ENCODE measurements at regions of chr3 and their contacts with region 1.

Region 1: DNA sequence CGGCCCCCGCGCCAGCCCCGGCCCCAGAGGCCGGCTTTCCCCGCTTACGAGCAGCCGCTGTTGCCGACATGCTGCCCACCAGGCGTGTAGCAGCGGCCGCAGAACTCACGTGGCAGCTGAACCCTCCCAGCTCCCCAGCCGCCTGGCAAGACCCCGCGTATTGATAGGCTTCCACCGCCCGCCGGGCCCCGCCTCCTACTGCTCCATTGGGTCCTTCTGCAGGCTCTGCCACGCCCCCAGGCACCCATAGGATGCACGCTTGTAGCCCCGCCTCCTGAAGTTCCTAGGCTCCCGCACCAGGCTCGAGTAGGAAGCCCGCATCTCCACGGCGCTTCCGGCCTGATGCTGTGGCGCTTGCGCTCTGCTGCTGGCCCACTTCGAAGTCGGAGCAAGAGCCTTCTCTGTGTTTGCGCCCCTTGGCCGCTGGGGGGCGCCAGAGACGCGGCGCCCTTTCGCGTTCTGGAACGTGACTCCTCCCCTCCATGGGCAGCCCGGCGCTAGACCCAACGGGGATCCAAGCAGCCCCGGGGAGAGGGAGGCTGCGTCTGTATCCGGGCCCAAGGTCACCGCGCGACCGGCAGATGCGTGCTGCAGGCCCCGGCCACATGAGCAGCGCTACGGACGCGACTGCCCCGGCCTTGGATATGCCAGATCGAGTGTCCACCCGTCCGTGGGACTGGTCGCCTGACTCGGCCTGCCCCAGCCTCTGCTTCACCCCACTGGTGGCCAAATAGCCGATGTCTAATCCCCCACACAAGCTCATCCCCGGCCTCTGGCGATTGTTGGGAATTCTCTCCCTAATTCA is at the starts of genes PARP3 and RRP9:
- DNase-seq: peak; percentile 93 to 99 (median 96)
- ATAC-seq: peak; percentile 96
- H3K4me3 ChIP-seq: peak within 1 kb of the TSS; percentile 90
- H3K27ac ChIP-seq: peak within 1 kb of the TSS; percentile 88
- H3K4me1 ChIP-seq: peaks cover 19 to 33% of the 10 kb centered on the region in 2 experiments; a peak in 4 of 5 replicates
- H3K27me3 ChIP-seq: no peaks in the 10 kb centered on the region
- CTCF ChIP-seq: peak; percentile 94 to 98 (median 96)
- EP300 ChIP-seq: no peak
- POLR2A ChIP-seq: peak; percentile 75
- RAD21 ChIP-seq: peak; percentile 84 to 88
- polyA plus RNA-seq, gene PARP3: 0.46 to 0.55 TPM
- polyA plus RNA-seq, gene RRP9: 5.2 to 12.9 TPM

Region 2: GRCh38 chr3:51974963-51975851 is 33.2 kb after region 1 on chr3 and contains the start of gene ABHD14A:
- CTCF ChIA-PET with region 1: no interaction called
- POLR2A ChIA-PET with region 1: no interaction called
- in situ Hi-C with region 1: no loop called
- intact Hi-C with region 1: loop called (anchors 1 kb)
- DNase-seq: peak; percentile 75 to 79 (median 76)
- ATAC-seq: peak; percentile 85
- H3K4me3 ChIP-seq: peak within 1 kb of the TSS; percentile 62
- H3K27ac ChIP-seq: peak within 1 kb of the TSS; percentile 98
- H3K4me1 ChIP-seq: peaks cover 24 to 55% of the 10 kb centered on the region in 2 experiments
- H3K27me3 ChIP-seq: no peaks in the 10 kb centered on the region
- CTCF ChIP-seq: no peak
- EP300 ChIP-seq: 0 out of 2 replicates have a peak, but pooled peaks have one; percentile 3
- POLR2A ChIP-seq: peak; percentile 70
- RAD21 ChIP-seq: no peak
- polyA plus RNA-seq, gene ABHD14A: 0.90 to 2.0 TPM

Region 3: GRCh38 chr3:51995346-51996163 is 53.6 kb after region 1 on chr3 and contains the start of gene RPL29:
- CTCF ChIA-PET with region 1: no interaction called
- POLR2A ChIA-PET with region 1: interaction called, 5 read pairs
- in situ Hi-C with region 1: no loop called
- intact Hi-C with region 1: loop called (anchors 1 kb)
- DNase-seq: peak; percentile 78 to 93 (median 82)
- ATAC-seq: peak; percentile 81
- H3K4me3 ChIP-seq: peak within 1 kb of the TSS; percentile 67
- H3K27ac ChIP-seq: peak within 1 kb of the TSS; percentile 80
- H3K4me1 ChIP-seq: peaks cover 36 to 42% of the 10 kb centered on the region in 2 experiments
- H3K27me3 ChIP-seq: no peaks in the 10 kb centered on the region
- CTCF ChIP-seq: no peak
- EP300 ChIP-seq: peak; percentile 55
- POLR2A ChIP-seq: peak; percentile 98
- RAD21 ChIP-seq: no peak
- polyA plus RNA-seq, gene RPL29: 568 to 871 TPM

Region 4: GRCh38 chr3:52056968-52057805 is 115.2 kb after region 1 on chr3:
- CTCF ChIA-PET with region 1: no interaction called
- POLR2A ChIA-PET with region 1: no interaction called
- in situ Hi-C with region 1: no loop called
- intact Hi-C with region 1: loop called (anchors 2 kb)
- DNase-seq: peak; percentile 93 to 98 (median 96)
- ATAC-seq: peak; percentile 91
- H3K4me3 ChIP-seq: peak overlapping the region; percentile 61
- H3K27ac ChIP-seq: peak overlapping the region; percentile 68
- H3K4me1 ChIP-seq: peaks cover 17 to 52% of the 10 kb centered on the region in 2 experiments; a peak in 4 of 5 replicates
- H3K27me3 ChIP-seq: no peaks in the 10 kb centered on the region
- CTCF ChIP-seq: 0 out of 6 replicates have a peak, but pooled peaks of 1 of the 3 experiments have one; percentile 11
- EP300 ChIP-seq: no peak
- POLR2A ChIP-seq: 0 out of 2 replicates have a peak, but pooled peaks have one; percentile 40
- RAD21 ChIP-seq: no peak; a peak in 1 of 4 replicates

Region 5: DNA sequence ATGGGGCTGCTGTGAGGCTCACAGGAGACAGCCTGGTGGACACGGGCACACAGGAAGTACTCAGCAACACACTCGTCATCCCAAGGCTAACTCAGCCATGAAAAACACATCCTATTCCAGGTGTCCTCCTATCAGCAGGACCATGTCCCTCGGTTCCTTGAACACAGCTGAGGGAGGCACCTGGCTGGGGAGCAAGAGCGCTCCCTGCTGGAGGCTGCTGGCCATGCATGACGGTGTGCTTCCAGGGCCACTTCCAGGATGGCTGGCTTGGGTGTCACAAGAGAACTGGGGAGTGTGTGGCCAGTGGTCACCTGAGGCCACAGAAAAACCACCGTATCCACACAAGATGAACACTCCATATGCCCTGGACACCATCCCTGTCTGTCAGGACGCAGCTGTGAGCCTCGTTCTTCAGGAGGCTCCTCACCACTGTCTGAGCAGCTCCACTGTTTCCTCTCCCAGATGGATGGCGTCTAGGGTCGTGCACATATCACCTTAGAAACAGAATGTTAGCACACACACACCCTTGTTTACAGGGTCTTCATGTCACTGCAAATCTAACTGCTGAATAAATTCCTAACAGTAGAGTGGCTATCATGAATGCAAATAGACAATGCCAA is 181.2 kb after region 1 on chr3:
- CTCF ChIA-PET with region 1: no interaction called
- POLR2A ChIA-PET with region 1: no interaction called
- in situ Hi-C with region 1: no loop called
- intact Hi-C with region 1: loop called (anchors 2 kb)
- DNase-seq: peak; percentile 73 to 82 (median 78)
- ATAC-seq: peak; percentile 95
- H3K4me3 ChIP-seq: no peak overlapping the region
- H3K27ac ChIP-seq: no peak overlapping the region
- H3K4me1 ChIP-seq: peaks cover 6 to 13% of the 10 kb centered on the region in 2 experiments; a peak in 4 of 5 replicates
- H3K27me3 ChIP-seq: no peaks in the 10 kb centered on the region
- CTCF ChIP-seq: peak; percentile 86 to 94 (median 86)
- EP300 ChIP-seq: no peak
- POLR2A ChIP-seq: no peak
- RAD21 ChIP-seq: peak; percentile 71 to 82

Region 6: DNA sequence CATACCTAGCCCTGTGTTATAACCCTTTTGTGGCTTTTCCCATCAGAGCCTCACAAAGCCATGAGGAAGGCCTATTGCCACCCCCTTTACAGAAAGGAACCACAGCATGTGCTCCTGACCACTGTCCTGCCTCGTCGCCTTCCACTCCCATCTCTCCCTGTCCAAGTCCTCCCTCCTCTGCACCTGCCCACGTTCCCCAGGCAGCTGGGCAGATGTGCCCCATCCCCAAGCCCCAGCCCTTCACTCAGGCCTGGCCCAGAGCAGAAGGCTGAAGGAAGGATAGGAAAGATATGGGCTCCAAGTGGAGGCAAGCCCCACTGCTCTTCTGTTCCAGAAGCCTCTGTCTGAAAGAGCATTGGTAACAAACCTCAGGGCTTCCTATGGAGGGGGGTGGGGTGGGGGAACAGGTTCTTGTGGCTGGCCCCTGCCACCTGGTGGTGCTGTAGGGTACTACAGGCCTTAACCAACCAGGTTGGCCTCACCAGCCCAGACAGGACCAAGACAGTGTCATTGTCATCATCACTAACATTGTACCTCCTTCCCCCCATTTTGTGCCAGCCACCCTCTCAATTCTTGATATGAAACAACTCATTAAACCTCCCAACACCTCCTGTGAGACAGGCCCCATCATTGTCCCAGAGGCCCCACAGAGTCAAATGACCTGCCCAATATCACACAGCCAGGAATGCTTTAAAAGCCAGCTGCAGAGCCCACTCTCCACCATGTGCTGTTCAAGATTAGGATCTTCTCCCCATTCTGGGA is 202.2 kb after region 1 on chr3:
- CTCF ChIA-PET with region 1: interaction called, 4 read pairs
- POLR2A ChIA-PET with region 1: no interaction called
- in situ Hi-C with region 1: no loop called
- intact Hi-C with region 1: loop called (anchors 5 kb)
- DNase-seq: peak; percentile 80 to 86 (median 84)
- ATAC-seq: peak; percentile 98
- H3K4me3 ChIP-seq: no peak overlapping the region
- H3K27ac ChIP-seq: no peak overlapping the region
- H3K4me1 ChIP-seq: no peaks in the 10 kb centered on the region
- H3K27me3 ChIP-seq: no peaks in the 10 kb centered on the region
- CTCF ChIP-seq: peak; percentile 83 to 85 (median 84)
- EP300 ChIP-seq: no peak
- POLR2A ChIP-seq: no peak
- RAD21 ChIP-seq: peak; percentile 89 to 92